Kidney (tissue), 22 donors: ENCODE measurements at regions of chr4 and their contacts with region 1.

Region 1: DNA sequence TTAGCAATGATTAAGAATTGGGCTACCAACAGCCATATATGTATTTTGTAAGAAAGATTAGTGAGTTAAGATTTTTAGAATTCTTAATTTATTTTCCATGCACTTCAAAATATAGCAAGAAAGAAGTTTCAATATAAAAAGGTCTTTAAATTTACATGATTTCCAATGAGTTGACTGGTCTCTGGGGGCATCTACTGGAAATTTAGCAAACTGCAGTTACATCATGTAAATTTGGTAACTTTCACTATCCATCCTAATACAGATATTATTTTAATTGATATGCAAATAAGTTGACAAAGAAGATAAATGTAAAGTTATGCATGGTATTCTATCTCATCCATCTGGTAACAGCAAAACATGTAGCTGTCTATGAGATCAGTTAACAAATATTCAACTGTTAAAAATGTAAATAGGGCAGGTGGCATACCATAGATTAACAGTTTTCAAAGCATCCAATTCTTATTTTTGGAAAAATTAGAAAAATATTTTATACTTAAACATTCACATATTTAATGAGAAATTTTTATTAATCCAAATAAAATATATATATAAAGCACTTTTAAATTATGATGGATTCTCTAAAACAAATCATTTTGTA is 29.1 kb downstream of the TTC29 start:
- DNase-seq: peak in 3 of 5 donors; percentile 16 to 70 (median 52)
- H3K4me3 ChIP-seq: no peak overlapping the region
- H3K27ac ChIP-seq: no peak overlapping the region
- H3K4me1 ChIP-seq: no peaks in the 10 kb centered on the region
- H3K27me3 ChIP-seq: no peaks in the 10 kb centered on the region
- CTCF ChIP-seq: peak; percentile 55

Region 2: DNA sequence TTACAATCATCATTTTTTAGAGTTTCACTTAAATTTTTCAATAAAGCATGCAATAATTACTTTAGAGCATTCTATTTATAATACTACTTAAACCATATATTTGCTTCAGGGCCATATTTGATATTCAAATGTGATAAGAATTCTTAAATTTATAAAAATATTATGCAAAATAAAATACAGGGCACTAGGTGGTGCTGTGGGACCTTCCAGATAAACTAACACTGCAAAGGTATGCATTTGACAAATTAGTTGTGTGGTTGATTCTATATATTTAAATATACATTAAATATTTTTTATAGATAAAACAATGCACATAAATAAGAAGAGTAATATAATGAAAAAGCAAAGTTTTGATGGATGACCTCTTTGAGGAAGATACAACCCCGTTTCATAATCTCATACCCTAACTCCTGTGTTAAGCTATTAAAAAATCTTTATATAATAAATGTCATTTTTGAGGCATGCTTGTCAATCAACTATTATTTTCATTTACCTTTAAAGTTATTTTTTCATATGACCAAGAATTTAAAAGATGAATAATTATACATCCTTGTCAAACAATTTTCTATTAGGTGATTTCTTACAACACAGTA is 573.9 kb before region 1 on chr4:
- intact Hi-C with region 1: loop called (anchors 10 kb)
- DNase-seq: peak in 2 of 5 donors; percentile 31 to 61
- H3K4me3 ChIP-seq: no peak overlapping the region
- H3K27ac ChIP-seq: no peak overlapping the region
- H3K4me1 ChIP-seq: no peaks in the 10 kb centered on the region
- H3K27me3 ChIP-seq: no peaks in the 10 kb centered on the region
- CTCF ChIP-seq: peak; percentile 44

Region 3: DNA sequence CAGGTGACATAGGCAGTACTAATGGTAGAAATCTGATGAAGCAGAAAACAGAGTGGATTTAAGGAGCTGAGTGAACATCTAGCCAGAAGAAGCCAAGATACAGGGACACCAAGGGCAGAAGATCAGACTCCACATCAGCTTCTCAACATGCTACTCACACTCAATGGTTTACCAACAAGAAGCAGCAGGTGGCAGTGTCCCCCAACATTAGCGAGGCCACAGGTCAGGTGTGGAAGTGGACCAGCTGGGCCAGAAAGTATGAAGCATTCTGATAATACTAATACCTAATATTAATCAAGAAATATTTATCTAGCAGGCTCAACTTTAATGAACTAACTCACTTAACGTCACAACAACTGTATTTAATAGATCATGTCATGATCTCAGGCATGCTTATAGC is 102.5 kb after region 1 on chr4:
- intact Hi-C with region 1: no loop called
- DNase-seq: peak in 4 of 5 donors; percentile 39 to 65 (median 52)
- H3K4me3 ChIP-seq: no peak overlapping the region
- H3K27ac ChIP-seq: no peak overlapping the region
- H3K4me1 ChIP-seq: no peaks in the 10 kb centered on the region
- H3K27me3 ChIP-seq: no peaks in the 10 kb centered on the region
- CTCF ChIP-seq: peak; percentile 53